ENCODE measurements at regions of chr13 and their contacts with region 1.

Region 1: DNA sequence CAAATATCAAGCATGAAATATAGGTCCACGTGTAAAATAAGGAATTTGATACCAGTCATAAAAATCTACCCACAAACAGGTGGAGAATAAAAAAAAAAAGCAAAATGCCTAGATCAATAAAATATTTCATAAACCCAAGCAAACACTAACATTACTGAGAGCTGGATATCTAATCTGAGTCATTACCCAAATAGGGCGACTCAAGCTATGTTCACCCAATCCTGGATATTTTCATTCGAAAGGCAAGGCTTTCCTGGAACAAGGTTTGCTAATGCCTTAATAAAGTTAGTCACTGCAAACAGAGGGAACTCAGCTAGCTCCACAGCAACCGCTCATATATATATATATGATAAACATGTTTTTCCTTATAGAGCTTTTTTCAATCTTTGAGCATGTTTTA is 33.5 kb upstream of the TM9SF2 start:
- DNase-seq: peak; percentile 94
- ATAC-seq: peak; percentile 89
- H3K4me3 ChIP-seq: no peak overlapping the region
- H3K27ac ChIP-seq: peak overlapping the region; percentile 80
- H3K4me1 ChIP-seq: peaks cover 33% of the 10 kb centered on the region
- H3K27me3 ChIP-seq: no peaks in the 10 kb centered on the region
- CTCF ChIP-seq: no peak

Region 2: DNA sequence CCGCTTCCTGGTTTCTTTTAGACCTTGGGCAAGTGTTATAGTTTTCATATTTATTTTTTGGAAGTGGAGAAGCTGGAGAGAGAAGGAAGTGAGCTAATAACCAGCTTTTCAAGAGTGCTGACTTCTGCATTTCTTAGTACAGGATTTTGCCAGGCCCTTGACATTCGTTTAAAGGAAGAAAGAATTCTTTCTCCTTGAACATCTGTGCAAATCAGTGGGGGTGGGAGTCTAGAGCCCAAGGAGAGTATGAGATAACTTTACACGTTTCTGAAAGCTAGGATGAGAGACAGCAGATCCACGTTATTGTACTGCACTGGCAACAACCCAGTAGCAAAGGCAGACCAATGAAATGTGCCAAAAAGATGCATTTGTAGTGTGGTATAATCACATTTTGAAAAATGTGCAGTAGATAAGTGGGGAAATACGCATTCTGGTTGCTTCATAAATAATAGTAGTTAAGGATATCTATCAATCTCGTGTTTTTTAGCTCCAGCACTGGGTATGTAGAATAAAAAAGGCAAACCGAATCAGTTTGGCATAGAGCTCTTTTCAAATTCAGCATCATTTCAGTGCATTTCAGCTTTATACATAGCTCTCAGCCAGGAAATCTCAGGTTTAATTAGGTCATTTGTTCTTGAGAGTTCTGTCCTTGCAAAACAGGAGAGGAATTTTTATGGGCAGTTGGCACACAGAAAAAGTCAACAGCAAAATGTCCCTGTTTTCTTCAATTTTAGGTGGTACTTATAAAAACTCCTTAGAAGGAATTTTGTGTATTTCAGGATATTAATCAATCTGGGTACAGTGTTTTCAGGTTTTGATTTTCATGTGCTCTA is 1295.0 kb before region 1 on chr13:
- CTCF ChIA-PET with region 1: no interaction called
- POLR2A ChIA-PET with region 1: interaction called, 12 read pairs
- intact Hi-C with region 1: no loop called
- DNase-seq: peak; percentile 24
- ATAC-seq: peak; percentile 63
- H3K4me3 ChIP-seq: no peak overlapping the region
- H3K27ac ChIP-seq: 0 out of 2 replicates have a peak overlapping the region, but pooled peaks have one; percentile 6
- H3K4me1 ChIP-seq: peaks cover 21% of the 10 kb centered on the region
- H3K27me3 ChIP-seq: no peaks in the 10 kb centered on the region
- CTCF ChIP-seq: no peak

Region 3: GRCh38 chr13:99501184-99501847 is 33.6 kb after region 1 on chr13 and contains the start of gene TM9SF2:
- CTCF ChIA-PET with region 1: interaction called, 7 read pairs
- POLR2A ChIA-PET with region 1: interaction called, 12 read pairs
- intact Hi-C with region 1: loop called (anchors 1 kb)
- DNase-seq: peak; percentile 92
- ATAC-seq: peak; percentile 63
- H3K4me3 ChIP-seq: peak within 1 kb of the TSS; percentile 93
- H3K27ac ChIP-seq: peak within 1 kb of the TSS; percentile 69
- H3K4me1 ChIP-seq: peaks cover 52% of the 10 kb centered on the region
- H3K27me3 ChIP-seq: no peaks in the 10 kb centered on the region
- CTCF ChIP-seq: no peak
- total RNA-seq, gene TM9SF2: 80.7 and 84.6 TPM in 2 replicates